GM12878 (cell line): ENCODE measurements at regions of chr2 and their contacts with region 1.

Region 1: DNA sequence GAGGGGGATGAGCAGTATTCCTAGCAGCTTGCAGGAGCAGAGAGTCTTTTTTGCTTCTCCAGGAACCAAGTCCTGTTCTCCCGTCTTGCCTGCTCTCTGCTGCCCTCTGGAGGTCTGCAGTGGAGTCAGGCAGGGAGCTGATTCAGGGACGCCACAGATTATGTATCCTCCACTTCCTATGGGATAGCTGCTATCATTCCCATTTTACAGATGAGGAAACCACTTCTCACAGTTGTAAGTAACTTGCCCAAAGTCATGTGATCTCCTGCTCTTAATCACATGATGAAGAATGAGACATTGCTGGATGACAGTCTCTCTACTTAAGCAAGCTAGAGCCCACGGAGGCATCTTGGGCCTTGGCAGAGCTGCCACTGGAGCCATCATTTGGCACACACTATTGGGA is 8.3 kb downstream of the SLC4A5 start:
- DNase-seq: peak; percentile 17
- ATAC-seq: peak; percentile 95
- H3K4me3 ChIP-seq: no peak overlapping the region
- H3K27ac ChIP-seq: no peak overlapping the region
- H3K4me1 ChIP-seq: no peaks in the 10 kb centered on the region
- H3K27me3 ChIP-seq: no peaks in the 10 kb centered on the region
- CTCF ChIP-seq: peak; percentile 88 to 97 (median 89)
- EP300 ChIP-seq: no peak
- POLR2A ChIP-seq: no peak
- RAD21 ChIP-seq: peak; percentile 90

Region 2: DNA sequence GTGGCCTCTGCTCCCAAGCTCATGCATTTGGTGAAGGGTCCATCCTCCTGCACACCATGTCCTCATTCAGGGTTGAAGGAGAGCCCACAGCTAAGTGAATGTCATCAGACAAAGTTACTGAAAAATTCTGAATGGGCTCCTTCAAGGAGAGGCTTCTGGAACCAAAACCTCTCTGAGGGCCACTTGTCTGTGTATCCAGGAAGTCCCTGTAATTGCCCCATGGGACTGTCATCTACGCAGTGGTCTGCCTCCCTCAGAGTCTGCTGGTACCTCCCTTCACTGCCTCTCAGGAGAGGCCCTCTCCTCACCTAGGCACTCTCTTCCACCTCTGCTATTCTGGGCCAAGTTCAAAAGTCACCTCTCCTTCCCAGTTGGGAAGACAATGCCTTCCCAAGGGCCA is 59.7 kb before region 1 on chr2:
- CTCF ChIA-PET with region 1: interaction called, 88 read pairs
- POLR2A ChIA-PET with region 1: no interaction called
- RAD21 ChIA-PET with region 1: interaction called, 6 read pairs
- SMC1A ChIA-PET with region 1: interaction called, 5 read pairs
- in situ Hi-C with region 1: no loop called
- intact Hi-C with region 1: no loop called
- DNase-seq: no peak
- ATAC-seq: no peak
- H3K4me3 ChIP-seq: no peak overlapping the region
- H3K27ac ChIP-seq: no peak overlapping the region
- H3K4me1 ChIP-seq: no peaks in the 10 kb centered on the region
- H3K27me3 ChIP-seq: no peaks in the 10 kb centered on the region; a peak in 1 of 4 replicates
- CTCF ChIP-seq: no peak
- EP300 ChIP-seq: no peak
- POLR2A ChIP-seq: no peak
- RAD21 ChIP-seq: no peak

Region 3: GRCh38 chr2:74345272-74345943 is 10.5 kb after region 1 on chr2:
- CTCF ChIA-PET with region 1: interaction called, 52 read pairs
- POLR2A ChIA-PET with region 1: interaction called, 3 read pairs
- RAD21 ChIA-PET with region 1: interaction called, 5 read pairs
- SMC1A ChIA-PET with region 1: interaction called, 15 read pairs
- in situ Hi-C with region 1: no loop called
- intact Hi-C with region 1: no loop called
- DNase-seq: no peak
- ATAC-seq: peak; percentile 65
- H3K4me3 ChIP-seq: no peak overlapping the region
- H3K27ac ChIP-seq: no peak overlapping the region
- H3K4me1 ChIP-seq: peaks cover 8% of the 10 kb centered on the region; the same call in 1 of the 2 replicates
- H3K27me3 ChIP-seq: no peaks in the 10 kb centered on the region
- CTCF ChIP-seq: no peak
- EP300 ChIP-seq: no peak
- POLR2A ChIP-seq: no peak
- RAD21 ChIP-seq: no peak

Region 4: GRCh38 chr2:74391580-74392448 is 56.9 kb after region 1 on chr2:
- CTCF ChIA-PET with region 1: interaction called, 48 read pairs
- POLR2A ChIA-PET with region 1: interaction called, 3 read pairs
- RAD21 ChIA-PET with region 1: interaction called, 13 read pairs
- SMC1A ChIA-PET with region 1: interaction called, 36 read pairs
- in situ Hi-C with region 1: no loop called
- intact Hi-C with region 1: no loop called
- DNase-seq: peak; percentile 76
- ATAC-seq: peak; percentile 89
- H3K4me3 ChIP-seq: peak overlapping the region; percentile 88
- H3K27ac ChIP-seq: peak overlapping the region; percentile 98
- H3K4me1 ChIP-seq: peaks cover 3% of the 10 kb centered on the region; the same call in 1 of the 2 replicates
- H3K27me3 ChIP-seq: no peaks in the 10 kb centered on the region
- CTCF ChIP-seq: peak; percentile 97 to 99 (median 98); a peak in 5 of 6 replicates
- EP300 ChIP-seq: no peak
- POLR2A ChIP-seq: peak; percentile 83
- RAD21 ChIP-seq: peak; percentile 59